CD4-positive, alpha-beta memory T cell (primary cell): ENCODE measurements at regions of chr20 and their contacts with region 1.

Region 1: GRCh38 chr20:44990425-44990824 is 24.1 kb downstream of the STK4 start:
- DNase-seq: peak in 1 of 5 donors; percentile 16
- H3K4me3 ChIP-seq: peak overlapping the region; percentile 25 to 34
- H3K4me3 Mint-ChIP-seq: peak overlapping the region; percentile 73 to 89 (median 88)
- H3K27ac ChIP-seq: peak overlapping the region; percentile 68
- H3K27ac Mint-ChIP-seq: peak overlapping the region; percentile 82 to 94 (median 91)
- H3K4me1 ChIP-seq: peaks cover 94% of the 10 kb centered on the region
- H3K4me1 Mint-ChIP-seq: peaks cover 45 to 89% (median 69%) of the 10 kb centered on the region in 4 donors
- H3K27me3 ChIP-seq: no peaks in the 10 kb centered on the region
- H3K27me3 Mint-ChIP-seq: no peaks in the 10 kb centered on the region

Region 2: GRCh38 chr20:44765652-44766347 is 224.6 kb before region 1 on chr20:
- CTCF ChIA-PET with region 1: no interaction called
- POLR2A ChIA-PET with region 1: no interaction called
- intact Hi-C with region 1: no loop called
- DNase-seq: no peak
- H3K4me3 ChIP-seq: no peak overlapping the region
- H3K4me3 Mint-ChIP-seq: no peak overlapping the region
- H3K27ac ChIP-seq: no peak overlapping the region
- H3K27ac Mint-ChIP-seq: no peak overlapping the region
- H3K4me1 ChIP-seq: no peaks in the 10 kb centered on the region
- H3K4me1 Mint-ChIP-seq: peaks cover 0 to 3% (median 0%) of the 10 kb centered on the region in 4 donors
- H3K27me3 ChIP-seq: no peaks in the 10 kb centered on the region
- H3K27me3 Mint-ChIP-seq: peaks cover 5 to 28% of the 10 kb centered on the region in 2 donors

Region 3: DNA sequence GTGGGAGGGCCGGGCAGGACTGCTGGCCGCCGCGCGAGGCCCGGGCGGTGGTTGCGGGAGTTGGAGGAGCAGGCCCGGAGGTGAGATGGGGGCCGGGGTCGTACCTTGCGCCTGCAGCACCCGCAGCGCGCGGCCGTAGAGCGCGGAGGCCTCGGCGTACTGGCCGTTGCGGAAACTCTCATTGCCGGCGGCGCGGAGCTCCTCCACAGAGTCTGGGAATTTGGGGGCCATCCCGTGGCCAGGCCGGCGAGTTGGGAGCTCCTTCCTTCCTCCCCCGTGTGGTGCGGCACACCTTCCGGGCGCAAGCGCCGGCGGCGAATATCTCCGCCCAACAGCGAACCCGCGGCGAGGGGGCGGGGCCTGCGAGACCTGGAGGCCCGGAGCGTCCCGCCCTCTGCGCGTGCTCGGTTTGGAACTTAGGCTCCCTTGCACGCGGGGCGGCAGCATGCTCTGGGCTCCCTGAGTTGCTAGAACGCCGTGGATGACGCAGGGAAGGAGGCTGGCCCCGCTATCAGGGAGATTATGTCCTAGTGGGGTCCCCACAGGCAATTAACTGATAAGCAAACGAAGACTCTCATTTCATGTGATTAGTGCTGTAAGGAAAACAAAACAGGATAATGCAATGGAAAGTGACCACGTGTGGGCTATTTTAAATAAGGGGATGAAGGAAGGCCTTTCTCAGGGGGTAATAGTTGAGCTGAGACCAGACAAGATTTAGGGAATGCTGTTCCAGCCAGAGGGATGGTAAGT is 30.1 kb before region 1 on chr20 and contains the start of gene TOMM34:
- CTCF ChIA-PET with region 1: interaction called, 12 read pairs
- POLR2A ChIA-PET with region 1: interaction called, 91 read pairs
- intact Hi-C with region 1: loop called (anchors 5 kb)
- DNase-seq: peak; percentile 89 to 91 (median 90)
- H3K4me3 ChIP-seq: peak within 1 kb of the TSS; percentile 54 to 67
- H3K4me3 Mint-ChIP-seq: peak within 1 kb of the TSS; percentile 94 to 100 (median 98)
- H3K27ac ChIP-seq: peak within 1 kb of the TSS; percentile 66
- H3K27ac Mint-ChIP-seq: peak within 1 kb of the TSS; percentile 84 to 99 (median 96)
- H3K4me1 ChIP-seq: peaks cover 34% of the 10 kb centered on the region
- H3K4me1 Mint-ChIP-seq: peaks cover 35 to 51% (median 38%) of the 10 kb centered on the region in 4 donors
- H3K27me3 ChIP-seq: no peaks in the 10 kb centered on the region
- H3K27me3 Mint-ChIP-seq: no peaks in the 10 kb centered on the region
- total RNA-seq, gene TOMM34: 7.6 to 8.5 TPM